Activated CD8-positive, alpha-beta T cell treated with anti-CD3 and anti-CD28 coated beads, Interleukin-2, amount 10 ng/mL, durations not matched to agents 7 days and 5 days (primary cell): ENCODE measurements at regions of chr11 and their contacts with region 1.

Region 1: GRCh38 chr11:31958076-31958735 is 132.7 kb upstream of the RCN1 start:
- DNase-seq: peak; percentile 66
- ATAC-seq: peak; percentile 65
- H3K4me3 Mint-ChIP-seq: no peak overlapping the region
- H3K27ac Mint-ChIP-seq: no peak overlapping the region
- H3K4me1 Mint-ChIP-seq: peaks cover 4% of the 10 kb centered on the region
- H3K27me3 Mint-ChIP-seq: no peaks in the 10 kb centered on the region

Region 2: GRCh38 chr11:31240338-31240904 is 717.8 kb before region 1 on chr11:
- CTCF ChIA-PET with region 1: interaction called, 27 read pairs
- POLR2A ChIA-PET with region 1: no interaction called
- DNase-seq: peak; percentile 25
- ATAC-seq: no peak
- H3K4me3 Mint-ChIP-seq: no peak overlapping the region
- H3K27ac Mint-ChIP-seq: no peak overlapping the region
- H3K4me1 Mint-ChIP-seq: no peaks in the 10 kb centered on the region
- H3K27me3 Mint-ChIP-seq: peaks cover 4% of the 10 kb centered on the region

Region 3: DNA sequence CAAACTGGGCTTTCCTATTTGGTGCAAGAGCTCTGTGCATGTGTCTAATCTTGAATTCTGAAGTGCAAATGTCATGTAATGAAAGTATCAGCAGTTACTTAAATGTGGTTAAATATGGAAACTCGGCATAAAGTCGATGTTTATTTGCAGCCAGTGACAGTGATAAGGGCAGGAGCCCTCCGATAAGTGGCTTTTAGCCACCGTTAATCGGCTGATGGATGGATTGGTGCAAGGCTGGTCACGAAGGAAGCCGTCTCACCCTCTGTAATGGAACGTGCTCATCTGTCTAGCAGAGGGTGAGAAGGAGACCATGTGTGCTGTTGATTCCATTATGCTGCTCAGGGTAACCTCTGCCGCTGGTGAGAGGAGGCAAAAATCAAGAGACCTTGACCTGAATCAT is 25.3 kb before region 1 on chr11:
- CTCF ChIA-PET with region 1: no interaction called
- POLR2A ChIA-PET with region 1: no interaction called
- DNase-seq: no peak
- ATAC-seq: no peak
- H3K4me3 Mint-ChIP-seq: no peak overlapping the region
- H3K27ac Mint-ChIP-seq: no peak overlapping the region
- H3K4me1 Mint-ChIP-seq: no peaks in the 10 kb centered on the region
- H3K27me3 Mint-ChIP-seq: peaks cover 7% of the 10 kb centered on the region

Region 4: GRCh38 chr11:31968461-31969358 is 10.5 kb after region 1 on chr11:
- CTCF ChIA-PET with region 1: interaction called, 16 read pairs
- POLR2A ChIA-PET with region 1: no interaction called
- DNase-seq: no peak
- ATAC-seq: no peak
- H3K4me3 Mint-ChIP-seq: no peak overlapping the region
- H3K27ac Mint-ChIP-seq: no peak overlapping the region
- H3K4me1 Mint-ChIP-seq: no peaks in the 10 kb centered on the region
- H3K27me3 Mint-ChIP-seq: no peaks in the 10 kb centered on the region

Region 5: DNA sequence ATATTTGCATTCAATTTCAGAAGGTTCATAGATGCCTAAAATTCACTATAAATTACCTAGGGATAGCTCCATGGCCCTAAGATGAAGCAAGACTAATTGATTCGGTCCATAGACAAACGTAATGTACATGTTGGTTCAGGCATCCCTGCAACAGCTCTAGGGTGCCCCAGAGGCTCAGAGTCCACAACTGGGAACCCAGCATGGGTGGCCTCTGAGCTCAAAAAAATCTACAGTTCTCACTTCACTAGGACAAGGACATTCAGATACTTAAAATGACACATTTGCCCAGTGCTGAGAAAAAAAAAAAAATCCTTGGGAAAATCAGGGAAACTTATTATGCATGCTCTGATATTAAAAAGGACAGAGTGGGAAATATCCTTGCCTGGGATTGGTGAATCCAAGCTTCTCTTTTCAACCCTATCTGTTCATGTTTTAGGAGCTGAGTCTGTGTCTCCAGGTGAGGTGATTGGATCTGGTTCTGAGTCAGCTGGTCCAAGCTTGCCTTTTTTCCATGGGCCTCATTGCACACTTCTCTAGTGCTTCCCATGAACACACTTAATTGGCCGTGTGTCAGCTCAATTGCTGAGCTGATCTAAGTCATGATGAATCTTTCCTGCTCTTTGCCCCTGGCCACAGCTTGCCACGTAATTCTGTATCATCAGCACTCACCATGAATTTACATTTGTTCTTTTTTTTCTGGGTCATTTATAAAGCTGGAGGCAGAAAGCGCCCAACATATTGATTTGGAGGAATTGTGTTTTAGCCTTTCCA is 16.3 kb after region 1 on chr11:
- CTCF ChIA-PET with region 1: interaction called, 16 read pairs
- POLR2A ChIA-PET with region 1: no interaction called
- DNase-seq: no peak
- ATAC-seq: no peak
- H3K4me3 Mint-ChIP-seq: no peak overlapping the region
- H3K27ac Mint-ChIP-seq: no peak overlapping the region
- H3K4me1 Mint-ChIP-seq: no peaks in the 10 kb centered on the region
- H3K27me3 Mint-ChIP-seq: peaks cover 13% of the 10 kb centered on the region

Region 6: DNA sequence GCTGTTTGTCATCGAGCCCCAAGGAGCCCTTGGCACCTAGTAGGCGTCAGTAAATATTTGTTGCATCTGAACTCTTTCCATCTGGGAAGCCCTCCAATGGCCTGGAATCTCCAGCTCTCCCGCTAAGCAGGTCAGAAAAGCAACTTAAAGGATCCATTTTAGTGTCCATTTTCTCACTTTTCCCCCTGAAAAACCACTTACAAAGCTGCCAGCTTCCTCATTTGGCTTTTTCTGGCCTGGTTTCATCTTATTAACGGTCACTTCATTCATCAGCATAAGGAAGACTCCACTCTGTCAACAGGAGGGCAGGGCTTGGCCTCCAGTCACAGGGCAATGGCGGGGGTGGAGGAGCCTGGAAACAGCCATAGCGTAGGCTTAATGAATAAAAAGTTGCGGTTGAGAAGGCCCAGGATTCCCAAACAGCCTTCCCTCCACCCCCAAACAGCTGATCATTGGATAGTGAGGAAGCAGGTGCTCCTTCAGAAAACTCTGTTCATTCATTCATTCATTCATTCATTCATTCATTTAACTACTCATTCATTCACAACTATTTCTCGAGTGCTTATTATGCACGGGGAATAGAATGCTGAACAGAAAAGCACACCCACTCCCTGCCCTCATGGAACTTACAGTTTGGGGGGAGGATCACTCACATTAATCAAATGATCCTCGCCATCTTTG is 28.1 kb after region 1 on chr11:
- CTCF ChIA-PET with region 1: interaction called, 11 read pairs
- POLR2A ChIA-PET with region 1: no interaction called
- DNase-seq: no peak
- ATAC-seq: no peak
- H3K4me3 Mint-ChIP-seq: no peak overlapping the region
- H3K27ac Mint-ChIP-seq: no peak overlapping the region
- H3K4me1 Mint-ChIP-seq: peaks cover 2% of the 10 kb centered on the region
- H3K27me3 Mint-ChIP-seq: peaks cover 33% of the 10 kb centered on the region